Activated T-helper 1 cell treated with anti-CD3 and anti-CD28 coated beads, Interleukin-12 subunit alpha, Interleukin-12 subunit beta, Interleukin-2, Interleukin-4 antibody, amounts not matched to agents 30 ng/mL and 10 ng/mL and 1 ng/mL, durations not matched to agents 14 hours and 24 hours and 36 hours (primary cell): ENCODE measurements at regions of chr1 and their contacts with region 1.

Region 1: GRCh38 chr1:168082008-168082876 is 54.5 kb downstream of the GPR161 start:
- DNase-seq: peak; percentile 53
- H3K4me3 Mint-ChIP-seq: no peak overlapping the region
- H3K27ac Mint-ChIP-seq: no peak overlapping the region
- H3K4me1 Mint-ChIP-seq: peaks cover 13% of the 10 kb centered on the region
- H3K27me3 Mint-ChIP-seq: peaks cover 3% of the 10 kb centered on the region

Region 2: DNA sequence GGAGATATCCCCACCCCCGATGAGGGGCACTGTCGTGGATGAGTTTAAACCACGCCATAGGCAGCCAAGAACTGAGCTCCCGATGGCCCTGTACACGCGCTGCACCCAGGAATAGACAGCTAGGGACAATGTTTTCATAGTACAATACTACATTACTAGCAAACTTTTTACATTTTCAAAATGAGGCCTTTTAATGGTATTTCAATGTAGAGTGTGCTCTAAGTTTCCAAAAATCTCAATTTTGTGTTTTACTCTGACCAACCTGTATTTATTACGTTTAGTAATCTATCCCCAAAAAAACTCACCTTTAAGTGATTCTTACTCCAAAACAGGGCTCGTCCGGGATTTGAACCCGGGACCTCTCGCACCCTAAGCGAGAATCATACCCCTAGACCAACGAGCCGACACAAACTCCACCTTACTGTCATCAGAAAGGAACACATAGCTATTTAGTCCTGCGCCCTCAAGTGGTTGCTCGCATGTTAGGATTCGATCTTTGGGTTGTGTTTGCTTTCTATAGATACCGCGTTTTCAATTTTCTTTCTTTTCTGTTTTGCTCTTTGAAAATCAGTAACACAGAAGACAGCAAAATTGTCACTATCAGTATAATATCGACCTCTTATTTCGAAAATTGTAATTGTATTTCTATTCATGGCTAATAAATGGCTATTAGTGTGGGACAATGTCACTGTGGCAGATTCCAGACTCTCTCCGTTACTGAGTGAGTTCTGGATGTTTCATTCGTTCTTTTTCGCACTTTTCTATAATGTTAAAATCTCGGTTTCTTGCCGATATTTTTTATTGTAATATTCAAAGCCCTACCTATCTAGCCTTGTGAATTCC is 366.9 kb before region 1 on chr1:
- intact Hi-C with region 1: loop called (anchors 2 kb)
- DNase-seq: peak; percentile 84
- H3K4me3 Mint-ChIP-seq: peak overlapping the region; percentile 96
- H3K27ac Mint-ChIP-seq: peak overlapping the region; percentile 91
- H3K4me1 Mint-ChIP-seq: peaks cover 61% of the 10 kb centered on the region
- H3K27me3 Mint-ChIP-seq: peaks cover 21% of the 10 kb centered on the region

Region 3: GRCh38 chr1:167899253-167899681 is 183.0 kb before region 1 on chr1:
- intact Hi-C with region 1: loop called (anchors 10 kb)
- DNase-seq: no peak
- H3K4me3 Mint-ChIP-seq: no peak overlapping the region
- H3K27ac Mint-ChIP-seq: no peak overlapping the region
- H3K4me1 Mint-ChIP-seq: no peaks in the 10 kb centered on the region
- H3K27me3 Mint-ChIP-seq: peaks cover 3% of the 10 kb centered on the region

Region 4: GRCh38 chr1:168145184-168146159 is 63.2 kb after region 1 on chr1:
- intact Hi-C with region 1: loop called (anchors 2 kb)
- DNase-seq: peak; percentile 72
- H3K4me3 Mint-ChIP-seq: no peak overlapping the region
- H3K27ac Mint-ChIP-seq: no peak overlapping the region
- H3K4me1 Mint-ChIP-seq: peaks cover 15% of the 10 kb centered on the region
- H3K27me3 Mint-ChIP-seq: peaks cover 12% of the 10 kb centered on the region

Region 5: DNA sequence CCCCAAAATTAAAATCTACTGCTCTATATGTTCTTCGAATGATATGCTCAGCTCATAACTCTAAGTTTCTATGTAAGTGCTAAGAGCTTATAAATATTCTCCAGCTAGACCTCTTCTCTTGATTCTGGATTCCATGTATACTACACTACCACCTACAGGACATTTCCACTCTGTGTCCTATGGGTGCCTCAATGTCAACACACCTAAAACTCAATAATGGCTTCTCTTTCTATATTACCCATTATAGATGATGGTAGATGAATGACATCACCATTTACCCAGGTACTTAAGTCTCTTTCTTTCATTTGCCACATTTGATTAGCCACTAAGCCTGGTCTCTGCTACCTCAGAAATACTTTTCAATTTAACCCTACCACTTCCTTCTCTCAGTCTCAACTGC is 239.7 kb after region 1 on chr1:
- intact Hi-C with region 1: loop called (anchors 1 kb)
- DNase-seq: no peak
- H3K4me3 Mint-ChIP-seq: no peak overlapping the region
- H3K27ac Mint-ChIP-seq: no peak overlapping the region
- H3K4me1 Mint-ChIP-seq: peaks cover 21% of the 10 kb centered on the region
- H3K27me3 Mint-ChIP-seq: peaks cover 2% of the 10 kb centered on the region